ENCODE measurements at regions of chr2 and their contacts with region 1.

Region 1: DNA sequence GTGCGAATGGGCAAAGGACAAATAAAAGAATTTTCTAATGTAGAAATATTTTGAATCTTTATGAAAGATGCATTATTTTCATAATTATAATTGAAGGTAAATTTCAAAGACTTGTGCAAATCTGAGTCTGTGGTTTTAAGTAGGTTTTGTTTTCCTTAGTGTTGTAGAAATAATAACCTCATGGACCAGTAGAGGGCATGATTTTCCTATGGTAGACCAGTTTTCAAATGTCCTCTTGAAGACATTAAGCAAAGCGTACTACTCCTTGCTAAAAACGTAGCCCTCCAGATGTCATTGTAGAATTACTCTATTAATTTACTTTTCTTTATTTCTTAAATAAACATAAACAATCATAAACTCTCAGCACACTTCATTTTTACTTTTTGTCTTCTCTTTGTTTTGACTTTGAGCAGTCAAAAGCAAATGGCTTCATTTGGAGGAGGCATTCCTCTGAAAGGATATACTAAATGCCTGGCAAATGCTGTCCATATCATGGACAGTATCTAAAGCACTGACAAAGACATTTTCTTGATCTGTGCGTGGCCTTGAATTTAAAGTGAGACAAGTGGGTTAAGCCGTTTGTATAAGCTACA is 85.8 kb upstream of the FAM237A start:
- DNase-seq: peak; percentile 77
- ATAC-seq: peak; percentile 66
- H3K4me3 ChIP-seq: no peak overlapping the region
- H3K27ac ChIP-seq: no peak overlapping the region
- H3K4me1 ChIP-seq: peaks cover 17% of the 10 kb centered on the region
- H3K27me3 ChIP-seq: peaks cover 4% of the 10 kb centered on the region; the same call in 1 of the 2 replicates
- CTCF ChIP-seq: peak; percentile 72

Region 2: GRCh38 chr2:206361407-206362045 is 194.9 kb before region 1 on chr2:
- CTCF ChIA-PET with region 1: no interaction called
- POLR2A ChIA-PET with region 1: no interaction called
- intact Hi-C with region 1: no loop called
- DNase-seq: peak; percentile 82
- ATAC-seq: peak; percentile 66
- H3K4me3 ChIP-seq: no peak overlapping the region
- H3K27ac ChIP-seq: peak overlapping the region; percentile 39; the same call in 1 of the 2 replicates
- H3K4me1 ChIP-seq: peaks cover 8% of the 10 kb centered on the region; the same call in 1 of the 2 replicates
- H3K27me3 ChIP-seq: no peaks in the 10 kb centered on the region
- CTCF ChIP-seq: no peak

Region 3: GRCh38 chr2:206614825-206615224 is 58.4 kb after region 1 on chr2:
- CTCF ChIA-PET with region 1: no interaction called
- POLR2A ChIA-PET with region 1: interaction called, 5 read pairs
- intact Hi-C with region 1: loop called (anchors 2 kb)
- DNase-seq: peak; percentile 88
- ATAC-seq: peak; percentile 57
- H3K4me3 ChIP-seq: peak overlapping the region; percentile 3; the same call in 1 of the 2 replicates
- H3K27ac ChIP-seq: peak overlapping the region; percentile 84
- H3K4me1 ChIP-seq: peaks cover 73% of the 10 kb centered on the region
- H3K27me3 ChIP-seq: no peaks in the 10 kb centered on the region
- CTCF ChIP-seq: no peak

Region 4: DNA sequence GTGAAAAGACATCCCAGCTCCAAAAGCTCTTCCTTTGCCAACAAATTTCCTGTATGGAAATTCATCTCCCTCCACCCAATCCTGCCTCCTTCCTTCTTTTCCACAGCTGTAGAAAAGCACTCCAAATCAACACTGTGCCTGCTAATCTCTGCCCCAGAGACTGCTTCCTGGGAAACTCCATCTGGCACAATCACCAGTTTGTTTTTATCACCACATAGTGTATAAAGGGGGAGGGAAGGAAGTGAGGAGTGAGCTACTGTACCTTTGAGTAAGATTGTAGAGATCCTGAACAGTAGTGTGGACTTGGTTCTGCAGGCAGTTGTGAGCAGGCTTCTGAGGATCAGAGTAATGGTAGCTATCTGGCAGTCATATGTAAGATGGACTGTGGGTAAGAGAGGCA is 71.2 kb after region 1 on chr2:
- CTCF ChIA-PET with region 1: interaction called, 3 read pairs
- POLR2A ChIA-PET with region 1: no interaction called
- intact Hi-C with region 1: loop called (anchors 2 kb)
- DNase-seq: no peak
- ATAC-seq: no peak
- H3K4me3 ChIP-seq: no peak overlapping the region
- H3K27ac ChIP-seq: no peak overlapping the region
- H3K4me1 ChIP-seq: no peaks in the 10 kb centered on the region
- H3K27me3 ChIP-seq: peaks cover 5% of the 10 kb centered on the region; the same call in 1 of the 2 replicates
- CTCF ChIP-seq: no peak

Region 5: DNA sequence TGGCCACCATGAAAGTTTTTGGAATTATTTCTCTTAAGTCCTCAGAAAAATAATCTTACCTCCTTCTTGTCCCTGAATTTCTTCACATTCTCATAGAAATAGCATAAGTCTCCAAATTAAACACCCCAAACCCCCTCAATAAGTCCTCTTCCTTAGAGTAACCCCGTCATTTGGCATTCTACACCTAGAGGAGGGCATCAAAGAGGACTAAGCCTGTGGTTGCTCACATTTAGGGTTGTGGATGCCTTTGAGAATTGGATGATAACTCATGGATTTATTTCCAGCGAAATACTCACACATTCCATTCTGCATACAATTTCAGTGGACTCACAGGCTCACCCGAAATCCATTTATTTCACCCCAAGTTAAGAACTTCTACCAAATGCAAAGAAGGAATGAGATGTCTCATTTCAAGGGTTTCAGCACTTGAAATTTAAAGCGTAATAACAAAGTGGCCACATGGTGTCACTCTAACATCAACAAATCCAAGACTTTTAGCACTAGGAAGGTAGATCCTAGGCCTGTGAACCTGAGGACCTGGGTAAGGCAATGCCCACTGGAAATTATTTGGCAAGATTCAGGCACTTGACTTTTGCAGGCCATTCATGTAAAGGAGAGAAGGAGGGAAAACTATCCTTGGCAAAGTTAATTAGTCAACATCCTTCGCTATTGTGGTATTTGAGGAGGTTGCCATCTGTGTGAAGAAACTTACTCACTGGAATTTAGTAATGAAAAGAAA is 137.1 kb after region 1 on chr2:
- CTCF ChIA-PET with region 1: interaction called, 3 read pairs
- POLR2A ChIA-PET with region 1: no interaction called
- intact Hi-C with region 1: loop called (anchors 1 kb)
- DNase-seq: peak; percentile 82
- ATAC-seq: peak; percentile 82
- H3K4me3 ChIP-seq: no peak overlapping the region
- H3K27ac ChIP-seq: no peak overlapping the region
- H3K4me1 ChIP-seq: no peaks in the 10 kb centered on the region
- H3K27me3 ChIP-seq: no peaks in the 10 kb centered on the region
- CTCF ChIP-seq: peak; percentile 84

Region 6: DNA sequence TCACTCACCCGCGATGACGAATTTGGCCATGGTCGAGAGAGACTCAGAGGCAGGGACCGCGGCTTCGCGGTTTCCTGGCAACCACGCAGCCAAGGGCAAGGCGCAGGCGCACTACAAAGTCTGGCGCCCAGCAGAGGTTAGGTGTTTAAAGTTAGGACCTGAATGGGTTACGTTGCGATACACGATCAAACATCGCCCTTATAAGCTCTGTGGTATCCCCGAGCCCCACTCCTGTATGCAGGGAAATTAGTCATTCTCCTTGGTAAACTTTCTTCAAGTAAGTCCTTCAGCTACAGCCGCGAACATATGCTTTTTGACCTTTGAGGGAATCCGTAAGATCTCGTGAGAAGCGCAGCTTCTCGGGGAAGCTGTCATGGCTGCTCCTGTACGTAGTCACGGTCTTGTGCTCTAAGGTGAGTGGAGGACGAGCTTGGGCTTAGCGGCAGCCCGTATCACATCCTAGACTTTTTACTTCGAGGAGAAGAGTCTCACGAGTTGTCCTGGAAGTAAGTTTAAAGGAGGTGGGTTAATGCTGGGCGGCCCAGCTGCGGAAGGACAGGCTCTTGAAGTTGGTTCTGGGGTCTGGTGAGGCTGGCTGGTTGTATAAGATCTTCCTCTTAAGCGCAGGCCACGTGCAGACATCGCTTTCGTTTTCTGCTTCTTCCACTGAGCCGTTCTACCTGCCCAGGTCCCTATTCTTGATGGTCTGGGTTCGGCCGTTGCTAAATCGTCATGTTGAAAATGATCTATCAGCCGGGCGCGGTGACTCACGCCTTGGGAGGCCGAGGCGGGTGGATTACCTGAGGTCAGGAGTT is 209.0 kb after region 1 on chr2 and contains the starts of genes FASTKD2 and MDH1B:
- CTCF ChIA-PET with region 1: no interaction called
- POLR2A ChIA-PET with region 1: no interaction called
- intact Hi-C with region 1: loop called (anchors 5 kb)
- DNase-seq: peak; percentile 93
- ATAC-seq: peak; percentile 91
- H3K4me3 ChIP-seq: peak within 1 kb of the TSS; percentile 100
- H3K27ac ChIP-seq: peak within 1 kb of the TSS; percentile 87
- H3K4me1 ChIP-seq: peaks cover 24% of the 10 kb centered on the region
- H3K27me3 ChIP-seq: peaks cover 16% of the 10 kb centered on the region
- CTCF ChIP-seq: no peak
- total RNA-seq, gene FASTKD2: 31.2 and 41.4 TPM in 2 replicates
- total RNA-seq, gene MDH1B: 0.23 and 0.40 TPM in 2 replicates

Region 7: GRCh38 chr2:206780671-206781070 is 224.2 kb after region 1 on chr2:
- CTCF ChIA-PET with region 1: no interaction called
- POLR2A ChIA-PET with region 1: no interaction called
- intact Hi-C with region 1: loop called (anchors 1 kb)
- DNase-seq: no peak
- ATAC-seq: no peak
- H3K4me3 ChIP-seq: no peak overlapping the region
- H3K27ac ChIP-seq: no peak overlapping the region
- H3K4me1 ChIP-seq: no peaks in the 10 kb centered on the region
- H3K27me3 ChIP-seq: no peaks in the 10 kb centered on the region
- CTCF ChIP-seq: no peak

Measured in PC-3 (cell line).